Activated CD4-positive, alpha-beta memory T cell treated with anti-CD3 and anti-CD28 coated beads for 36 hours (primary cell): ENCODE measurements at regions of chr7 and their contacts with region 1.

Region 1: DNA sequence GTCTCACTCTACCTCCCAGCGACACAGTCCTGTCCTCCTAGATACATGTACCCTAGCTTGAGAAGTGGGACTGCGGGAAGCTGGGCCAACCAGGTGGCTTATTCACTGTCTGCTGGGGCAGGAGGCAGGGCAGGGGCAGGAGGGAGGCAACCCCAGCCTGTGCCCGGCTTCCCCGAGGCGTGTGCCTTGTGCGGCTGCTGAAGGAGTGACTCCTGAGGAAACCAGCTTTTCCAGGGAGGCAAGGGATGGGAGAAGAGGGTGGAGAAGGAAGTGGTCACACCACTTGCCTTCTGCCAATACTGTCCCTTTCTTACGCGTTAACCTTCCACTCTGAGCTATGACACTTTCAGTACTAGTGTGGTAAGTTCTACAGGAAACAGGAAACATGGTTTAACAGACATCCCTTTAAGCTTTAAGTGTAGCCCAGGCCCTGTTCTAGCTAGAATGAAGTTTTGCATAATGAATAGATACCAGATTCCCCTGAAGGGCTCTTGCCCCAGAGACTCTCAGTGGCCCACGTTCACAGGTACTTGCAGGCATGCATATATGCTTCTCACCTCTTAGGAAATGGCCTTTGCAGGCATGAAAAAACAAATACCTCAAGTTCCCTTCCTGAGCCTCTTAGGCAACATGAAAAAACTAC is 40.6 kb downstream of the SYPL1 start:
- DNase-seq: peak; percentile 67
- H3K4me3 Mint-ChIP-seq: peak overlapping the region; percentile 62
- H3K27ac Mint-ChIP-seq: peak overlapping the region; percentile 92
- H3K4me1 Mint-ChIP-seq: peaks cover 26% of the 10 kb centered on the region
- H3K27me3 Mint-ChIP-seq: no peaks in the 10 kb centered on the region

Region 2: GRCh38 chr7:106126170-106126938 is 54.9 kb after region 1 on chr7:
- CTCF ChIA-PET with region 1: no interaction called
- POLR2A ChIA-PET with region 1: interaction called, 3 read pairs
- intact Hi-C with region 1: loop called (anchors 1 kb)
- DNase-seq: peak; percentile 56
- H3K4me3 Mint-ChIP-seq: peak overlapping the region; percentile 56
- H3K27ac Mint-ChIP-seq: peak overlapping the region; percentile 14
- H3K4me1 Mint-ChIP-seq: peaks cover 14% of the 10 kb centered on the region
- H3K27me3 Mint-ChIP-seq: peaks cover 3% of the 10 kb centered on the region